Spleen (tissue), 13 donors: ENCODE measurements at regions of chr20 and their contacts with region 1.

Region 1: DNA sequence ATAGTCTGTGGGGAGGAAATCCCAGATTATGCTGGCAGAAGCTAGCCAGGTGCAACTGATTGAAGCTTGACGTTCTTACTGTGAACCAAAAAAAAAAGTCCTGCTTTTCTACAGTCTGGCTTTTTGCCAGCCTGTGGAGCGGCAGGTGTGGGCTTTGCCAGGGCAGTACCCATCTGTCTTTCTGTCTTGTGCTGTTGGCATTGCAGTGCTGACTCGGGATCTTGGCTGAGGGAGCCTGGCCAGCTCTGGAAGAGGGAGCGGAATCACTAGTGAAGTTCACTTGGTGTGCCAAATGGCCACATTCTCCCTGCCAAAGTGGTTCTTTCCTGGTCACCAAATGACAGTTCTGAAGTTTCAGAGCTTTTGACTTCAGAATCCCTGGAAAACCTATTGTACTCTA is 5.0 kb downstream of the KIF3B start:
- DNase-seq: no peak
- H3K4me3 ChIP-seq: no peak overlapping the region
- H3K27ac ChIP-seq: peak overlapping the region in 3 of 8 donors; percentile 80 to 87 (median 85)
- H3K4me1 ChIP-seq: peaks cover 36 to 97% (median 73%) of the 10 kb centered on the region in 6 donors
- H3K27me3 ChIP-seq: no peaks in the 10 kb centered on the region
- CTCF ChIP-seq: no peak
- POLR2A ChIP-seq: no peak

Region 2: DNA sequence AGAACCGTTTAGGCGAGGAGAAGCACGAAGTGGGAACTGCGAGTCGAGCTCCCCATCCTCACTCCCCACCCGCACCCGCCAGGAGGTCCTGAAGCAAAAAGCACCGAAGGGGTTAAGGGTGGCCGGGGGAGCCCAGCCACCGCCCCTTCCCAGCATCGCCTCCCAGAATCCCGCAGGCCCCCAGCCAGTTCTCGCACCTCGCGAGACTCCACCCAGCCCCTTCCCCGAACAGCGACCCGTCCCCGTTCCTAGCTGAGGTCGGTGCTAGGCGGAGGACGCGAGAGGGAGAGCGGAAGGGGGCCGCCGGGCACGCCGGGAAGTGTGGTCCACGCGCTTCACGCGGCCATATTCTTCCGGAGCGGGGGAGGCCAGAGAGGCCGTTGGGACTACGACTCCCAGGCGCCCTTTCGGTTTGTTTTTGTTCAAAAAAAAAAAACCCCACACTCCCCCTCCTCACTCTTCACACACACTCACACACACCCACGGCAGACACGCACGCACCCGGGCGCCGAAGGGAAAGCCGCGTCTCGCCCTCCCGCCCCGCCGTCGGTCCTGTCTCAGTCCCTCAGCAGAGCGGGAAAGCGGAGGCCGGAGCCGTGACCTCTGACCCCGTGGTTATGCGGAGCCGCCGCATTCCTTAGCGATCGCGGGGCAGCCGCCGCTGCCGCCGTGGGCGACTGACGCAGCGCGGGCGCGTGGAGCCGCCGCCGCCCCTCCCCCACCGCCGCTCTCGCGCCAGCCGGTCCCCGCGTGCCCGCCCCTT is 75.6 kb after region 1 on chr20 and contains the start of gene ASXL1:
- intact Hi-C with region 1: loop called (anchors 5 kb)
- DNase-seq: peak; percentile 99
- H3K4me3 ChIP-seq: peak within 1 kb of the TSS; percentile 82 to 97 (median 91)
- H3K27ac ChIP-seq: peak within 1 kb of the TSS; percentile 90 to 99 (median 98)
- H3K4me1 ChIP-seq: peaks cover 7 to 69% (median 50%) of the 10 kb centered on the region in 6 donors
- H3K27me3 ChIP-seq: no peaks in the 10 kb centered on the region
- CTCF ChIP-seq: peak in 6 of 11 experiments; percentile 8 to 45 (median 31)
- POLR2A ChIP-seq: peak in 2 of 3 donors; percentile 31 to 58
- total RNA-seq, gene ASXL1: 88.2 to 149 (median 101) TPM

Region 3: GRCh38 chr20:32411955-32412706 is 129.7 kb after region 1 on chr20:
- intact Hi-C with region 1: no loop called
- DNase-seq: no peak
- H3K4me3 ChIP-seq: no peak overlapping the region
- H3K27ac ChIP-seq: peak overlapping the region in 1 of 8 donors; percentile 2
- H3K4me1 ChIP-seq: peaks cover 12 to 68% (median 33%) of the 10 kb centered on the region in 6 donors
- H3K27me3 ChIP-seq: no peaks in the 10 kb centered on the region
- CTCF ChIP-seq: no peak
- POLR2A ChIP-seq: no peak